ENCODE measurements at regions of chr1 and their contacts with region 1.

Region 1: GRCh38 chr1:161165742-161166668 is at the start of gene PPOX:
- DNase-seq: peak; percentile 81 to 97 (median 92)
- ATAC-seq: peak; percentile 91
- H3K4me3 ChIP-seq: peak within 1 kb of the TSS; percentile 58 to 79
- H3K4me3 Mint-ChIP-seq: peak within 1 kb of the TSS; percentile 88
- H3K27ac ChIP-seq: peak within 1 kb of the TSS; percentile 88 to 91
- H3K27ac Mint-ChIP-seq: peak within 1 kb of the TSS; percentile 98
- H3K4me1 ChIP-seq: peaks cover 29% of the 10 kb centered on the region
- H3K4me1 Mint-ChIP-seq: peaks cover 56% of the 10 kb centered on the region
- H3K27me3 ChIP-seq: no peaks in the 10 kb centered on the region
- H3K27me3 Mint-ChIP-seq: no peaks in the 10 kb centered on the region
- CTCF ChIP-seq: peak; percentile 52
- total RNA-seq, gene PPOX: 18.5 to 19.8 TPM

Region 2: GRCh38 chr1:160108888-160109662 is 1056.9 kb before region 1 on chr1:
- CTCF ChIA-PET with region 1: no interaction called
- POLR2A ChIA-PET with region 1: no interaction called
- intact Hi-C with region 1: no loop called
- DNase-seq: peak in 4 of 9 experiments; percentile 29 to 63 (median 53)
- ATAC-seq: peak; percentile 74
- H3K4me3 ChIP-seq: no peak overlapping the region
- H3K4me3 Mint-ChIP-seq: no peak overlapping the region
- H3K27ac ChIP-seq: no peak overlapping the region
- H3K27ac Mint-ChIP-seq: no peak overlapping the region
- H3K4me1 ChIP-seq: no peaks in the 10 kb centered on the region
- H3K4me1 Mint-ChIP-seq: no peaks in the 10 kb centered on the region
- H3K27me3 ChIP-seq: no peaks in the 10 kb centered on the region
- H3K27me3 Mint-ChIP-seq: peaks cover 8% of the 10 kb centered on the region
- CTCF ChIP-seq: peak; percentile 35

Region 3: GRCh38 chr1:161153679-161154426 is 12.2 kb before region 1 on chr1 and contains the start of gene UFC1:
- CTCF ChIA-PET with region 1: interaction called, 36 read pairs
- POLR2A ChIA-PET with region 1: interaction called, 26 read pairs
- intact Hi-C with region 1: loop called (anchors 1 kb)
- DNase-seq: peak; percentile 66 to 96 (median 78)
- ATAC-seq: peak; percentile 92
- H3K4me3 ChIP-seq: peak within 1 kb of the TSS; percentile 95 to 98
- H3K4me3 Mint-ChIP-seq: peak within 1 kb of the TSS; percentile 96
- H3K27ac ChIP-seq: peak within 1 kb of the TSS; percentile 98 to 99
- H3K27ac Mint-ChIP-seq: peak within 1 kb of the TSS; percentile 100
- H3K4me1 ChIP-seq: peaks cover 17% of the 10 kb centered on the region
- H3K4me1 Mint-ChIP-seq: peaks cover 30% of the 10 kb centered on the region
- H3K27me3 ChIP-seq: no peaks in the 10 kb centered on the region
- H3K27me3 Mint-ChIP-seq: no peaks in the 10 kb centered on the region
- CTCF ChIP-seq: no peak
- total RNA-seq, gene UFC1: 94.7 to 96.6 TPM

Region 4: DNA sequence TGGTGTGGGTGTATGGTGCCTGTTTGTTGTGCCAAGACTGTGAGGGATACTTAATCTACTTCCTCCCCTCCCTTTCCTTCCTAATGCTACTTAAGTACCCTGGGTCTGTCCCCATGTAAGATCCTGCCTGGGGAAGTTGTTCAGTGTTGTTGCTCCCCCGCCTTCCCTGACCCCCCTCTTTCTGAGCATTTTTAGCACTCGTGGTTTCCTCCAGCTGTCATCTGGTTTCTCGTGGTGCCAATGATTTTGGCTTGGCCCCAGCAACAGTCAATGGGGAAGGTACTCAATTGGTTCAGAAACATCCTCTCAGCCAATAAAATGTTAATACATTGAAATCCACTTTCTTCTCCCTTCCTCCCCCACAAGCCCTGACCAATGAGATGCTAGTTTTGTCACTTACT is 19.3 kb after region 1 on chr1:
- CTCF ChIA-PET with region 1: interaction called, 55 read pairs
- POLR2A ChIA-PET with region 1: interaction called, 36 read pairs
- intact Hi-C with region 1: loop called in 1 of 2 experiments (anchors 2 kb)
- DNase-seq: peak; percentile 59 to 95 (median 81)
- ATAC-seq: peak; percentile 76
- H3K4me3 ChIP-seq: peak overlapping the region; percentile 4 to 60
- H3K4me3 Mint-ChIP-seq: peak overlapping the region; percentile 87
- H3K27ac ChIP-seq: peak overlapping the region; percentile 27 to 88
- H3K27ac Mint-ChIP-seq: peak overlapping the region; percentile 95
- H3K4me1 ChIP-seq: peaks cover 83% of the 10 kb centered on the region
- H3K4me1 Mint-ChIP-seq: peaks cover 79% of the 10 kb centered on the region
- H3K27me3 ChIP-seq: no peaks in the 10 kb centered on the region
- H3K27me3 Mint-ChIP-seq: no peaks in the 10 kb centered on the region
- CTCF ChIP-seq: no peak

Region 5: GRCh38 chr1:161201828-161202725 is 36.1 kb after region 1 on chr1 and contains the start of gene NDUFS2:
- CTCF ChIA-PET with region 1: interaction called, 21 read pairs
- POLR2A ChIA-PET with region 1: interaction called, 20 read pairs
- intact Hi-C with region 1: loop called in 1 of 2 experiments (anchors 1 kb)
- DNase-seq: peak; percentile 90 to 99 (median 95)
- ATAC-seq: peak; percentile 98
- H3K4me3 ChIP-seq: peak within 1 kb of the TSS; percentile 84 to 93
- H3K4me3 Mint-ChIP-seq: peak within 1 kb of the TSS; percentile 95
- H3K27ac ChIP-seq: peak within 1 kb of the TSS; percentile 87
- H3K27ac Mint-ChIP-seq: peak within 1 kb of the TSS; percentile 98
- H3K4me1 ChIP-seq: peaks cover 58% of the 10 kb centered on the region
- H3K4me1 Mint-ChIP-seq: peaks cover 69% of the 10 kb centered on the region
- H3K27me3 ChIP-seq: no peaks in the 10 kb centered on the region
- H3K27me3 Mint-ChIP-seq: no peaks in the 10 kb centered on the region
- CTCF ChIP-seq: no peak
- total RNA-seq, gene NDUFS2: 53.0 to 63.4 TPM

Region 6: GRCh38 chr1:161292631-161293030 is 126.6 kb after region 1 on chr1:
- CTCF ChIA-PET with region 1: interaction called, 11 read pairs
- POLR2A ChIA-PET with region 1: no interaction called
- intact Hi-C with region 1: no loop called
- DNase-seq: no peak
- ATAC-seq: no peak
- H3K4me3 ChIP-seq: no peak overlapping the region
- H3K4me3 Mint-ChIP-seq: no peak overlapping the region
- H3K27ac ChIP-seq: no peak overlapping the region
- H3K27ac Mint-ChIP-seq: no peak overlapping the region
- H3K4me1 ChIP-seq: no peaks in the 10 kb centered on the region
- H3K4me1 Mint-ChIP-seq: no peaks in the 10 kb centered on the region
- H3K27me3 ChIP-seq: no peaks in the 10 kb centered on the region
- H3K27me3 Mint-ChIP-seq: no peaks in the 10 kb centered on the region
- CTCF ChIP-seq: no peak

Measured in CD8-positive, alpha-beta T cell (primary cell).